Mammary epithelial cell (primary cell): ENCODE measurements at regions of chr14 and their contacts with region 1.

Region 1: DNA sequence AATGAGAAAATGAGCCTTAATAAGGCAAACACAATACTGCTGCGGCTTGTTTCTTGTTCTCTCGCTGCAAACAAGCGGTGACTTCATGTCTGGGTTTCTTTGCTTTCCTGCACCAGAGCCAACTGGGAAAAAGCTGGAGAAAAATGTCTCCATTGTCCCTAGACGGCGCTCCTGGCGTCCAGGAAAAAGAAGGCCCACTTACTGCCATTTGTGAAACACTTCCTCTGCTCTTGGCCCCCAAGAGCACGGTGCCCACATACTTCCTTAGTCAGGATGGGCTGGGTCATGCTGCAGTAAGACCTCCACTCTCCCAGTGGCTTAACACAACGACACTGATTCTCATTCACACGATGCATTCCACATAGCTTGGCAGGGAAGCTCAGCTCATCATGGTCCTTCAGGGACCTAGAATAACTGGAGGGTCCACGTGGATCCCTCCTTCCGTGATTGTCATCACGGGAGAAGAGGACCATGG is 86.0 kb upstream of the BCL11B start:
- DNase-seq: no peak
- H3K4me3 ChIP-seq: no peak overlapping the region
- H3K27ac ChIP-seq: no peak overlapping the region
- H3K4me1 ChIP-seq: no peaks in the 10 kb centered on the region
- H3K27me3 ChIP-seq: no peaks in the 10 kb centered on the region
- CTCF ChIP-seq: no peak

Region 2: DNA sequence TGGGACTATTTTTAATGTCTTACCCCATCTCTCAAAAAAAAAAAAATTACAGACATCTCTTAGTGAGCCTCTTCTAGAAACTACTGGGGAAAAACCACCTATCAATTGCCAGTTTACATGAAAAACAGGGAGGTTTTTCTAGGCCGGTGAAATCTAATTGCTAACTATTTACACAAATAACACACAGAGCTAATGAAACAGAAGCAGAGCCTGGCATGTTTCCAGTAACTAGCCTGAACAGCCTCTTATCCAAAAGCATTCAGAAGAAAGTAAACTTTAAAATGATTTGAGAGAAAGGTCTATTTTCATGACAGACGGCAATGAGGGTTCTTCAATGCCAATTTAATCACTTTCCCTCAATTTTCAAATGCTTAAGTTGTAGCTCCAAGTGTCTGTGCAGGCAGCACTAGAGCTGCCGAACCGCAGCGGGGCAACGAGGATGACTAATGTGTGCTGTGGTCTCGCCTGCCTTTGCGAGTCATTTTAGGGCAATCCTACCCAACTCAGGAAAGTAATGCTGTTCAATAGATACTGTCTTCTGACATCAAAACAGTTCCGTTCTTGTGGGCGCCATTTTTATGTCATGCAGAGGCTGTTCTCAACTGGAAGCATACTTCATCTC is 38.1 kb after region 1 on chr14:
- CTCF ChIA-PET with region 1: no interaction called
- dilution Hi-C with region 1: loop called (anchors 5 kb)
- in situ Hi-C with region 1: no loop called
- intact Hi-C with region 1: no loop called
- DNase-seq: peak; percentile 43
- H3K4me3 ChIP-seq: no peak overlapping the region
- H3K27ac ChIP-seq: no peak overlapping the region
- H3K4me1 ChIP-seq: no peaks in the 10 kb centered on the region
- H3K27me3 ChIP-seq: no peaks in the 10 kb centered on the region
- CTCF ChIP-seq: no peak

Region 3: GRCh38 chr14:99460793-99461192 is 102.8 kb after region 1 on chr14:
- CTCF ChIA-PET with region 1: no interaction called
- dilution Hi-C with region 1: loop called (anchors 5 kb)
- in situ Hi-C with region 1: no loop called
- intact Hi-C with region 1: no loop called
- DNase-seq: peak; percentile 95
- H3K4me3 ChIP-seq: no peak overlapping the region
- H3K27ac ChIP-seq: peak overlapping the region; percentile 25
- H3K4me1 ChIP-seq: peaks cover 27% of the 10 kb centered on the region
- H3K27me3 ChIP-seq: no peaks in the 10 kb centered on the region
- CTCF ChIP-seq: no peak